H1 (cell line): ENCODE measurements at regions of chr13 and their contacts with region 1.

Region 1: GRCh38 chr13:72839831-72840426 is 58.0 kb downstream of the PIBF1 start:
- DNase-seq: peak in 1 of 2 experiments; percentile 51
- H3K4me3 ChIP-seq: no peak overlapping the region
- H3K27ac ChIP-seq: no peak overlapping the region
- H3K4me1 ChIP-seq: no peaks in the 10 kb centered on the region
- H3K27me3 ChIP-seq: no peaks in the 10 kb centered on the region
- CTCF ChIP-seq: peak; percentile 58 to 82 (median 70)
- EP300 ChIP-seq: no peak
- POLR2A ChIP-seq: no peak
- RAD21 ChIP-seq: peak; percentile 84 to 86

Region 2: DNA sequence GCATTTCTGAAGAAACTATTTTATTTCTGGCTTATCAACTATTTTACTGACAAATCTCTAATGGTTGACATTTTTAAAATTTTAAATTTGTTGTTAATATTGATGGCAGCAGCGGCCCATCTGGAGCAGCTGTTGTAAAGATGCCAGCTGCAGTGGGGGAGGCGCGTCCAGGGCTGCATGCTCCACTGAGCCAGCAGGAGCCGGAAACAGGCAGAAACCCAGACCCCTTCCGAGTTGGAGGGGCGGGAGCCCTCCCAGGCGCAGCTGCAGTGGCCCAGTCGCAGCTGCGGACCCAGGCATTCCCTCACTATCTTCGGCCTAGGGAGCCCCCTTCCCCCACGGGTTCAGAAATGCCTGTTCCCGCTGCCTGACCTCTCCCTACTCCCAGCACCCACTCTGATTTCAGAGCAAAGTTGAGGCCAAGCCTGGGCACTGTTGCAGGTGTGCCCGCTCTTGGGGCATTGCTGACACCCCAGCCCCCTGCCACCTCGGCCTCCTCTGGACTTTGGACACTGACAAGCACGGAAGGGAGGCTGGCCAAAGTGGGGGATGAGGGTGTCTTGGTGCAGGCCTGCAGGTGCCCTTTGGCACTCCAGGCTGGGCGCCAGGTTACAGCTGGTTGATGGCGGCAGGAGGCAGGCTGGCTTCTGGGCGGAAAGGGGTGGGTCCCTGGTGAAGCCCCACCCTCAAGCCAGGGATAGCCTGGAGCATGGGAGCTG is 11.2 kb after region 1 on chr13:
- CTCF ChIA-PET with region 1: interaction called, 27 read pairs
- POLR2A ChIA-PET with region 1: no interaction called
- DNase-seq: peak in 1 of 2 experiments; percentile 46
- H3K4me3 ChIP-seq: no peak overlapping the region
- H3K27ac ChIP-seq: no peak overlapping the region
- H3K4me1 ChIP-seq: no peaks in the 10 kb centered on the region; a peak in 1 of 7 replicates
- H3K27me3 ChIP-seq: no peaks in the 10 kb centered on the region
- CTCF ChIP-seq: no peak
- EP300 ChIP-seq: no peak
- POLR2A ChIP-seq: no peak
- RAD21 ChIP-seq: no peak